ENCODE measurements at regions of chr5 and their contacts with region 1.

Region 1: GRCh38 chr5:151509231-151509630 is 61.8 kb downstream of the SLC36A1 start:
- DNase-seq: no peak
- ATAC-seq: no peak
- H3K4me3 ChIP-seq: no peak overlapping the region
- H3K27ac ChIP-seq: no peak overlapping the region
- H3K4me1 ChIP-seq: no peaks in the 10 kb centered on the region
- H3K27me3 ChIP-seq: no peaks in the 10 kb centered on the region

Region 2: GRCh38 chr5:151315998-151316597 is 193.1 kb before region 1 on chr5:
- intact Hi-C with region 1: loop called in 1 of 4 experiments (anchors 10 kb)
- DNase-seq: peak; percentile 79 to 91 (median 88)
- ATAC-seq: peak; percentile 70 to 86
- H3K4me3 ChIP-seq: no peak overlapping the region
- H3K27ac ChIP-seq: no peak overlapping the region
- H3K4me1 ChIP-seq: no peaks in the 10 kb centered on the region
- H3K27me3 ChIP-seq: no peaks in the 10 kb centered on the region

Region 3: DNA sequence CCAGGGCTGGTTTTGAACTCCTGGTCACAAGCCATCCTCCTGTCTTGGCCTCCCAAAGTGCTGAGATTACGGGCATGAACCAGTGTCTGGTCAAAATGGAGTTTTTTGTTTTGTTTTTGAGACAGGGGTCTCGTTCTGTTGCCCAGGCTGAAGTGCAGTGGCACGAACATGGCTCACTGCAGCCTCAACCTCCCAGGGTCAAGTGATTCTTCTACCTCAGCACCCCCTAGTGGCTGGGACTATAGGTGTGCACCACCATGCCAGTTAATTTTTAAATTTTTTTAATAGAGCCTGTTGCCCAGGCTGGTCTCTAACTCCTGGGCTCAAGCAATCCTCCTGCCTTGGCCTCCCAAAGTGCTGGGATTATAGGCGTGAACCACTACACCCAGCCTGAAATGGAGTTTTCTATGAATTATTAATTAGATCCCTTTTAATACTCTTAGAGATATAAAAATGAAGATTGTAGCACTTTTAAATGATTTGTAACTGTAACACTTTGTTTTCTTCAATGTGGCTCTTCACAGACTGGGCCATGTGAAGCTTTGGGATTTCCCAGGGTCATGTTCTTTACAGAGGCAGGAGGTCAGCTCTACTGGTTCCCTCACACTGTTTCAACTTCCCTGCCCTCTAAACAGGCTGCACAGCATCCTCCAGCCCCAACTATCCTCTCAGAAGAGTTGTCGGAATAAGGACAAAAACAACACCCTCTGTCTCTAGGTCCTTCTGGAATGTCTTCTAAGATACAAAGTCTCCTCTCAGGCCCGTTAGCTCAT is 210.2 kb after region 1 on chr5:
- intact Hi-C with region 1: no loop called
- DNase-seq: peak in 2 of 3 donors; percentile 52 to 59
- ATAC-seq: peak; percentile 65 to 74
- H3K4me3 ChIP-seq: no peak overlapping the region
- H3K27ac ChIP-seq: peak overlapping the region; percentile 52
- H3K4me1 ChIP-seq: peaks cover 12% of the 10 kb centered on the region
- H3K27me3 ChIP-seq: no peaks in the 10 kb centered on the region

Measured in right cardiac atrium (tissue), 5 donors.